HepG2 (cell line): ENCODE measurements at regions of chr7 and their contacts with region 1.

Region 1: DNA sequence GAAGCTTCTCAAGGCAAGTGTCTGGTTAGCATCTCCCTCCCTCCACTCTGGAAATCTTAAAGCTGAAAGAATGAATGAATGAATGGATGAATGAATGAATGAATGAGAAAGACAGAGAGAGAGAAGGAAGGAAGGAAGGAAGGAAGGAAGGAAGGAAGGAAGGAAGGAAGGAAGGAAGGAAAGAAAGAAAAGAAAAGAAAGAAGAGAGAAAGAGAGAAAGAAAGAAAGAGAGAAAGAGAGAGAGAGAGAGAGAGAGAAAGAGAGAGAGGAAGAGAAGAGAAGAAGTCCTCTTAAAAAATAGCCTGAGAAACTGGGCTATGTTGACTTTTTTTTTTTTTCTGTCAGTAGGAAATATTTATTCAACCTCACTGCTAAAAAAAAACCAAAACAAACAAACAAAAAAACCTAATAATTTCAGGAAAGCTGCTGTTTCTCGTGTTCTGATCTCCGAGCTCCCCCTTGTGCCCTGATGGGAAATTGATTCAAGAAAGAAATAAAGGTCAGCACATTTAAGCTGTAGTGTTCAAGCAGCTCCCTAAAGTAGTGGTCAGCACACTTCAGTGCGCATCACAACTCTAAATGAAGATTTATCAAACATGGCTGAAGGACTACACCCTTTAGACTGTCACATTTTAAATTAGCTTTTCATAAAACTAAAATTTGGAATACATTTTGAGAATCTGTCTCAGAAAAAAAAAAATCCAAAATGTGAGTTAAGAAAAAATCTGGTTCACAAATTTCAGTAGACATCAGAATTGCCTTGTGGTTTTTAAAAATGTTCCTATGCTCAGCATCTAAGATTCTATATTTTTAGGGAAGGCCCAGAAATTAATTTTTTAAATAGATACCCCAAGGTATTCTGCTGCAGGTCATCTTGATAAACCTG is 154.3 kb downstream of the ELAPOR2 start:
- DNase-seq: peak; percentile 16
- ATAC-seq: peak; percentile 68
- H3K4me3 ChIP-seq: no peak overlapping the region
- H3K27ac ChIP-seq: no peak overlapping the region
- H3K4me1 ChIP-seq: no peaks in the 10 kb centered on the region
- H3K27me3 ChIP-seq: no peaks in the 10 kb centered on the region
- CTCF ChIP-seq: peak; percentile 71
- EP300 ChIP-seq: no peak
- POLR2A ChIP-seq: no peak
- RAD21 ChIP-seq: peak; percentile 53

Region 2: GRCh38 chr7:85890244-85890811 is 1014.9 kb before region 1 on chr7:
- CTCF ChIA-PET with region 1: interaction called, 4 read pairs
- POLR2A ChIA-PET with region 1: no interaction called
- in situ Hi-C with region 1: loop called (anchors 25 kb)
- intact Hi-C with region 1: no loop called
- DNase-seq: peak; percentile 39
- ATAC-seq: peak; percentile 62
- H3K4me3 ChIP-seq: no peak overlapping the region
- H3K27ac ChIP-seq: no peak overlapping the region
- H3K4me1 ChIP-seq: no peaks in the 10 kb centered on the region
- H3K27me3 ChIP-seq: no peaks in the 10 kb centered on the region
- CTCF ChIP-seq: peak; percentile 65
- EP300 ChIP-seq: no peak
- POLR2A ChIP-seq: no peak
- RAD21 ChIP-seq: no peak

Region 3: GRCh38 chr7:86469680-86470295 is 435.4 kb before region 1 on chr7:
- CTCF ChIA-PET with region 1: no interaction called
- POLR2A ChIA-PET with region 1: no interaction called
- in situ Hi-C with region 1: no loop called
- intact Hi-C with region 1: loop called (anchors 10 kb)
- DNase-seq: peak; percentile 70
- ATAC-seq: peak; percentile 95
- H3K4me3 ChIP-seq: no peak overlapping the region
- H3K27ac ChIP-seq: no peak overlapping the region
- H3K4me1 ChIP-seq: no peaks in the 10 kb centered on the region
- H3K27me3 ChIP-seq: no peaks in the 10 kb centered on the region
- CTCF ChIP-seq: peak; percentile 87
- EP300 ChIP-seq: no peak
- POLR2A ChIP-seq: no peak
- RAD21 ChIP-seq: peak; percentile 63

Region 4: DNA sequence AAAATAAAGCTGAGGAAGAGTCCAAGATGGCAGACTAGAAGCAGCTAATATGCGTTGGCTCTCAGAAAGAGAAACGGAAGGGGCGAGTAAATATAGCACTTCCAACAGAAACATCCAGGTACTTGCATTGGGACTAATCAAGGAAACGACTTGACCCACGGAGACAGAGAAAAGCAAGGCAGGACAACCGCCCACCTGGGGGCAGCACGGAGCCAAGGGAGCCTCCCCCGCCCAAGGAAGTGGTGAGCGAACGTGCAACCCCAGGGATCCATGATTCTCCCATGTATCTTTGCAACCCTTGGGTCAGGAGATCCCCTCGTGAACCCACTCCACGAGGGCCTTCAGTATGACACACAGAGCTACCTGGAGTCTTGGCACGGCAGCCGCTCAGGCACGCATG is 306.9 kb before region 1 on chr7:
- CTCF ChIA-PET with region 1: interaction called, 11 read pairs
- POLR2A ChIA-PET with region 1: no interaction called
- in situ Hi-C with region 1: loop called (anchors 5 kb)
- intact Hi-C with region 1: loop called (anchors 1 kb)
- DNase-seq: peak; percentile 10
- ATAC-seq: peak; percentile 87
- H3K4me3 ChIP-seq: no peak overlapping the region
- H3K27ac ChIP-seq: no peak overlapping the region
- H3K4me1 ChIP-seq: no peaks in the 10 kb centered on the region
- H3K27me3 ChIP-seq: no peaks in the 10 kb centered on the region
- CTCF ChIP-seq: peak; percentile 69
- EP300 ChIP-seq: no peak
- POLR2A ChIP-seq: no peak
- RAD21 ChIP-seq: no peak

Region 5: DNA sequence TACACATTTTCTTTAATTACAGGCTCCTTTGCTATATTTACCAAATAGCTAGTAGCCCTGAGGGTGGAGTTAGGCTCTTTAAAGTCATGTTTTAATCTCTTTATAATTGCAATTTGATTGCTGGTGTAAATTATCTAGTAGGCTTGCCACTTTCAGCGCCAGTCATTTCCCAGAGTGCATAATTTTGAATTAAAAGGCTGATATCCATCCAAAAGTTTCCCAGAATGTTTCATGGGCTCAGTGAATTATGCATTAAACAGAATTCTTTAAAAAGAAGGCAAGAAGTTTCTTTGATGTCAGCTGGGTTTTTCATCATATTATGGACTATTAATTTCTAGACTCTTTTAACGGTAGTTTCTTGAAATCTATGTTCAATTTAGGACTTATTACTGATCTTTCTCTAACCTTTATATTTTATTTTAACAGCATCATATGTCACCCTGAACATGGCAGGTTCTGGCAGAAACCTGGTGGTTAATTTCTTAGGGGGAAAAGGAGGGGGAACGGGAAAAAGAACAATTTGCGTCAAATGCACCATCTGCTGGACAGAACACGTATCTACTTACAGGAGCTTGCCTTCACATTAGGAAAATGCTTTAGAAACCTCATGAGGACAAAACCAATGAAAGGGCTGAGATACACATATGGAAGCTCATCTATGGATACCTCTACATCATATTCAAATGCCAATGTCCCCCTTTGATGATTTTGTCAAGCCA is 90.4 kb before region 1 on chr7:
- CTCF ChIA-PET with region 1: interaction called, 3 read pairs
- POLR2A ChIA-PET with region 1: no interaction called
- in situ Hi-C with region 1: no loop called
- intact Hi-C with region 1: loop called (anchors 1 kb)
- DNase-seq: peak; percentile 20
- ATAC-seq: peak; percentile 59; the same call in 2 of the 3 replicates
- H3K4me3 ChIP-seq: no peak overlapping the region
- H3K27ac ChIP-seq: no peak overlapping the region
- H3K4me1 ChIP-seq: no peaks in the 10 kb centered on the region
- H3K27me3 ChIP-seq: no peaks in the 10 kb centered on the region
- CTCF ChIP-seq: peak; percentile 53
- EP300 ChIP-seq: no peak
- POLR2A ChIP-seq: no peak
- RAD21 ChIP-seq: no peak

Region 6: DNA sequence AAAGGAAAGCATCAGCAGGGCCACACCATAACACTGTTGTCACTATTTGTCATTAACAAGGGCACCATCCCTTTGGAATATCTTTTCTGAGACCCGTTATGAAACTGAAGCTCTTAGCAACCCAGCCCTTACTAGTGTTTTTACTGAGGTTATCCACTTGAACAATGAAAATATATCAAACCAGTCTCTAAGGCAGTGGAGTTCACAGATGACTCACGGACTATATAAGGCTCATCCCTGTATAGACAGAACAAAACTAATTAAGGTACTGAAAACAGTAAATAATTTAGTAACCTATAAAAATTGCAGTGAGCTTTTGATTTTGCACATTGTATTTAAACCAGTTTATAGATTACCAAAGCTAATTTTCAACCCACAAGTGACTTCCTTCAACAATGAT is 41.7 kb before region 1 on chr7:
- CTCF ChIA-PET with region 1: no interaction called
- POLR2A ChIA-PET with region 1: no interaction called
- in situ Hi-C with region 1: no loop called
- intact Hi-C with region 1: no loop called
- DNase-seq: no peak
- ATAC-seq: no peak
- H3K4me3 ChIP-seq: no peak overlapping the region
- H3K27ac ChIP-seq: no peak overlapping the region
- H3K4me1 ChIP-seq: no peaks in the 10 kb centered on the region
- H3K27me3 ChIP-seq: no peaks in the 10 kb centered on the region
- CTCF ChIP-seq: no peak
- EP300 ChIP-seq: no peak
- POLR2A ChIP-seq: no peak
- RAD21 ChIP-seq: no peak

Region 7: GRCh38 chr7:86925221-86925620 is 20.0 kb after region 1 on chr7:
- CTCF ChIA-PET with region 1: no interaction called
- POLR2A ChIA-PET with region 1: no interaction called
- in situ Hi-C with region 1: no loop called
- intact Hi-C with region 1: no loop called
- DNase-seq: no peak
- ATAC-seq: no peak
- H3K4me3 ChIP-seq: no peak overlapping the region
- H3K27ac ChIP-seq: no peak overlapping the region
- H3K4me1 ChIP-seq: no peaks in the 10 kb centered on the region
- H3K27me3 ChIP-seq: no peaks in the 10 kb centered on the region
- CTCF ChIP-seq: no peak
- EP300 ChIP-seq: no peak
- POLR2A ChIP-seq: no peak
- RAD21 ChIP-seq: no peak